ENCODE measurements at regions of chr7 and their contacts with region 1.

Region 1: GRCh38 chr7:45923290-45923689 is 2.2 kb upstream of the IGFBP3 start:
- DNase-seq: no peak
- H3K4me3 ChIP-seq: peak overlapping the region in 2 of 3 experiments; percentile 58 to 66
- H3K27ac ChIP-seq: no peak overlapping the region
- H3K4me1 ChIP-seq: peaks cover 28% of the 10 kb centered on the region
- H3K27me3 ChIP-seq: peaks cover 32% of the 10 kb centered on the region
- CTCF ChIP-seq: peak; percentile 82 to 92 (median 89)

Region 2: DNA sequence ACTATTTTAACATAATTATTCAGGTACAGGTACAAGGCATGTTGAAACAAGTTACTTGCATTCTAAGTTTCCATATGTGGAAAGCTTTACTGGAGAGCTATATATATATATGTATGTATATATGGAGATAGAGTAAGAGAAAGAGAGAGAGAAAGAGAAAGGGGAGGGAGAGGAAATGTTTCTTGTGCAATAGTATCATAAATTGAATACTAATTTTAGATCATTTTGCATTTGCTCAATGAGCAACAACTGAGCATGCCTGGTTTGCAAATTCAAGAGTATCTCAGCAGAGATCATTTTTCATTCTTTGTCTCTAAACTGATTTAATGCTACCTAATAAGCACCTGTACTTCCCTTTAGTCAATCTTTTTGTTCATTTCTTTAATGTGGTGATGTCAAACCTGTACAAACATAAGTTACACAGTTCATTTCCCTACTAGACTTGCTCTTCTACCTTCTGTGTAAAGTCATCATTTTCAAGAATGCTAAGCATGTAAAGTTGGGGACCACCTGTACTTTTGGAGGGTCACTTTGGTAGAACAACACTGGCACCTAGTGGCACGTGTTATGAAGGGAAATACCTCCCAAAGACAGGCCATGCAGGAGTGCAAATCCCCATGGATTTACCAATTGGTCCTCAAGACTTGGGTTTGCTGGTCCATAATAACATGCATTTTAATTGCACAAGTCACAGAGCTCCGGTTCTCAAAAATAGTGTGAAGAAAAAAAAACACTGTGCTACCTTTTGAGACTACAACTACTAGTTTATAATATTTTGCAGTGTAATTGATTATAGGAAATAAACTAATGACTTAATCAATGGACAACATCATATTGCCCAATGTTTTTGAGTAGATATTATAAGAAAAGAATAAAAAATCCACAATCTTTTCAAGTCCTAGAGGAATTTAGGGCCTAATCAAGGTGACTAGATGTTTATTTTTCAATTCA is 429.0 kb after region 1 on chr7:
- dilution Hi-C with region 1: loop called (anchors 10 kb)
- DNase-seq: no peak
- H3K4me3 ChIP-seq: no peak overlapping the region
- H3K27ac ChIP-seq: no peak overlapping the region
- H3K4me1 ChIP-seq: peaks cover 3% of the 10 kb centered on the region
- H3K27me3 ChIP-seq: no peaks in the 10 kb centered on the region
- CTCF ChIP-seq: peak; percentile 67 to 91 (median 75)